ENCODE measurements at regions of chr3 and their contacts with region 1.

Region 1: DNA sequence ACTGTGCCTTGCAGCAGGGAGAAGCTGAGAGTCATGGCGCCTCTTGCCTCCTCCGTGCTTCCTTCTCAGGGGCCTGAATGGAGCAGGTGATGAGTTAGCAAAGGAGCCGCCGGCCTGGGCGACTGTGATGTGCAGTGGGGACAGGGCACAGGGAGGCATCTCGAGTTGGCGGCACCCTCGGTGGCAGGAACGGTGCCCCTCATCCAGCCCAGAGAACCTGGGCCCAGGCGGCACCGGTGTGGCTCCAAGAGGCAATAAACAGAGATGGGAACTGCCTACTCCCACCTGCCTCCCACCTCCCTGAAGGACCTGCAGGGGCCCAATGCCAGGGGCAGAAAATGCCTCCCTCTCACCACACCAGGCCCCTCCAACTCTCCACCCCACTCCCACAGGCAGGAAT is 6.2 kb downstream of the SLC41A3 start:
- DNase-seq: no peak

Region 2: DNA sequence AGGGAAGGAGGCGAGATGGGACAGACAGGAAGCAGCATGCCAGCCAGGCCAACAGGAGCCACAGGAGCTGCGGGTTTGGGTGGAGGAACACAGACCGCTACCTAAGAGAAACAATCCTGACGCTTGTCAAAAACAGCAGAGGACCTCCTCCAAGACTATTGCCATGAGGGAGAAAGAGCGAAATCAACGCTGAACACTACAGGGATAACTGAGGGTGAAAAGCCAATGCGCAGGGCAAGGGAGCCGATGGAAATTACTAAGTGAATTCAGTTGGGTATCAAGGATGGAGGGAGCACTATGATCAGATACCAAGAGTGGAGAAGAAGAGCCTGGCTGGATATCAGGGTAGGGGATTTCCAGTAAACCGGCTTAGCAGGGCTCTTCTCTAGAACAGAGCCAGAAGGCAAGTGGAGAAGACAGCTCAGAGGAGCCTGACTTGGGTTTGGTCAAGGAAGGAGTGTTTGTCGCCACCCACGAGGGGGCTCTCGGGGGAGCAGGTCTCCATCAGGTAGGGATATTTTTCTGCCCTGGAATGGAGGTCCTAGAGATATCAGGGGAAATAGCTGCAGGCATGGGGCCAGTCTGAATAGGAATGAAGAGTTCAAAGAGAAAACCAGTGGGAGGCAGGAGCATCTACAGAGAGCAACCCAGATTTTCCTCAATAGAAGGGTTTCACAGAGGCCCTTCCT is 42.2 kb before region 1 on chr3:
- intact Hi-C with region 1: loop called in 1 of 2 experiments (anchors 2 kb)
- DNase-seq: peak; percentile 26

Region 3: DNA sequence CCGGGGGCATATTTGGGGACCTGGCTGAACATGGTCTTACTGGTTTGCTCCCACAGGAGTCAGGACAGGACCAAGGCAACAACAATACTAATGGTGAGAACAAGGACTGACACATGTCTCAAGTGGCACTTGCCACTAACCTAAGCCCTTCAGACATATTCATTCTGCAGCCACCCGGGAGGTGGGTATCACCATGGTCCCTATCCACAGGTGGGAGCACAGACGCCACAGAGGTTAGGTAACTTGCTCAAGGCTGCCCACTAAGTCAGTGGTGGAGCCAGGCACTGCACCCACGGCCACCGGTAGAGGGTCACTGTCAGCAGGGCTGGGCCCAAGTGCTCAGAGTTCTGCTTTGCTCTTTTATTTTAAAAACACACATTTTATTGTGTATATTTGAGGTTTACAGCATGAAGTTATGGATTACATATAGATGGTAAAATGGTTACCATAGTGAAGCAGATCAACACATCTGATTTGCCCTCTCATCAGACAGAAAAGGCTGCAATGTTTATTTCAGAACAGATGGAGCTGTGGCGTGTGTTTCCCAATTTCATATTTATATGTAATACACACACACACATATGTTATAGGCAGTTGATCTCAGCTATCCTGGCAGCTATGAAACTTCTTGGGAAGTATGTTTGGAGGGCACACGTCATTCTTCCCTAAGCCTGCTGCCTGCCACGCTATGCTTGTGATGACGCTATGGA is 36.1 kb after region 1 on chr3:
- intact Hi-C with region 1: no loop called
- DNase-seq: peak; percentile 70